Activated T-helper 1 cell treated with anti-CD3 and anti-CD28 coated beads, Interleukin-12 subunit alpha, Interleukin-12 subunit beta, Interleukin-2, Interleukin-4 antibody, amounts not matched to agents 30 ng/mL and 10 ng/mL and 1 ng/mL, durations not matched to agents 14 hours and 24 hours and 36 hours (primary cell): ENCODE measurements at regions of chr6 and their contacts with region 1.

Region 1: GRCh38 chr6:40640599-40641227 is 53.5 kb upstream of the LRFN2 start:
- DNase-seq: peak; percentile 58
- H3K4me3 Mint-ChIP-seq: peak overlapping the region; percentile 54
- H3K27ac Mint-ChIP-seq: peak overlapping the region; percentile 32
- H3K4me1 Mint-ChIP-seq: peaks cover 36% of the 10 kb centered on the region
- H3K27me3 Mint-ChIP-seq: peaks cover 3% of the 10 kb centered on the region

Region 2: DNA sequence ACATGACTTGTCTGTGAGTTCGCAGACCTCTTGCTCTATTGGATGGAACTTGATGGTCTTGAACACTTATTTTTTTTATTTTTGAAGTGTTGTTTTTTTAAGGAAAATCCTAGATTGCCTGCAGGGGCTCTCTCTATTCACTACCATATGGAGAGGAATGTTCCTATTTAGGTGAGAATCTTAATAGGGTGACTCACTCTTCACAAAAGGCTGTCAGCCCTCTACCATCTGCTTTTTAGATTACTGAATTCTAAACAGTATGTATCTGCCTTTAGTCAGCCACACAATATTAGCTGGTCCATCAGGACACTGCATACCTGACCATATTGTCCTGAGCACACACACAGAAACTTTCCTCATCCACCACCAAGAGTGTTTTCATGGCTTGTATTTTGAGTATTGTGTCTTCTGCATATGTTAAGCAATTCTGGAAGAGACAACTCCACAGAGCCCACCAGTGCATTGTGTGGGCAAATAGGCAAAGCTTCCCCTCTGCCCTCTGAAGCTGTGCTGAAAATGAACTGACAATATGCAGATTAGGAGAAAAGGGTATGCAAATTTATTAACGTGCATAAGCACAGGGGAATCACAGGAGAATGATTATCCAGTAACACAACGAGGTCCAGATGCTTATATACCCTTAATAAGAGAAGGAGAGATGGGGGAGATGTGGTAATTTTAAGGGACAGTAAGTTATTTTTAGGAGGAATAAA is 1994.4 kb before region 1 on chr6:
- intact Hi-C with region 1: loop called (anchors 5 kb)
- DNase-seq: no peak
- H3K4me3 Mint-ChIP-seq: no peak overlapping the region
- H3K27ac Mint-ChIP-seq: no peak overlapping the region
- H3K4me1 Mint-ChIP-seq: peaks cover 7% of the 10 kb centered on the region
- H3K27me3 Mint-ChIP-seq: no peaks in the 10 kb centered on the region